PC-9 (cell line): ENCODE measurements at regions of chr9 and their contacts with region 1.

Region 1: DNA sequence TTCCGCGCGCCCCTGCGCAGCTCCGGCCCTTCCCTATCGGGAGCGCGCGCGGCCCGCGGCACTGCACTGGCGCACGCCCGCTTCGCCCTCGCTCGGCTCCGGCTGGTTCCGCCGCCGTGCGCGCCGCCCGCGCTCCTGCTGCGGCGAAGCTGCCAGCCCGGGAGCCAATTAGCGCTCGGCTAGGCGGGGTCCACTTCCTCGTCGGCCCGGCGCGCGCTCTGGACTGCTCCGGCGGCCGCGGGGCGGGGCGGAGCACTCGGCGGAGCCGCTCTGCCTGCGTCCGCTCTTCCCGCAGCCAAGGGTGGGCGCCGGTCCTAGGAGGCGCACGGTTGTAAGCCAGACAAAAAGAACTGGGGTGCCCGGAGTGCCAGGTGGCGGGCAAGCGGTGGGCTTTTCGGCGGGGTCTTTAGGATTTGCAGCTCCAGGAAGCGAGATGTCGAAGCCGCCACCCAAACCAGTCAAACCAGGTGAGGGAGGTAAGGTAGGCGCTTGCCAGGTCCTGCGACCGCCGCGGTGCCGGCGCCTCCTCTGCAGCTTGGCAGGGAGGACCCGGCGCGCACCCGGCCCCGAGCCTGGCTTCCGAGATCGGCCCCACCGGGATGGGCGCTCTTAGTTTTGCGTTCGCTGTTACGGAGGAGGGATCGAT is at the start of gene OSTF1:
- DNase-seq: peak; percentile 84 to 98
- H3K4me3 ChIP-seq: peak within 1 kb of the TSS; percentile 78
- H3K27ac ChIP-seq: peak within 1 kb of the TSS; percentile 81
- H3K4me1 ChIP-seq: peaks cover 26% of the 10 kb centered on the region
- H3K27me3 ChIP-seq: no peaks in the 10 kb centered on the region
- CTCF ChIP-seq: no peak
- total RNA-seq, gene OSTF1: 42.0 and 58.4 TPM in 2 replicates

Region 2: DNA sequence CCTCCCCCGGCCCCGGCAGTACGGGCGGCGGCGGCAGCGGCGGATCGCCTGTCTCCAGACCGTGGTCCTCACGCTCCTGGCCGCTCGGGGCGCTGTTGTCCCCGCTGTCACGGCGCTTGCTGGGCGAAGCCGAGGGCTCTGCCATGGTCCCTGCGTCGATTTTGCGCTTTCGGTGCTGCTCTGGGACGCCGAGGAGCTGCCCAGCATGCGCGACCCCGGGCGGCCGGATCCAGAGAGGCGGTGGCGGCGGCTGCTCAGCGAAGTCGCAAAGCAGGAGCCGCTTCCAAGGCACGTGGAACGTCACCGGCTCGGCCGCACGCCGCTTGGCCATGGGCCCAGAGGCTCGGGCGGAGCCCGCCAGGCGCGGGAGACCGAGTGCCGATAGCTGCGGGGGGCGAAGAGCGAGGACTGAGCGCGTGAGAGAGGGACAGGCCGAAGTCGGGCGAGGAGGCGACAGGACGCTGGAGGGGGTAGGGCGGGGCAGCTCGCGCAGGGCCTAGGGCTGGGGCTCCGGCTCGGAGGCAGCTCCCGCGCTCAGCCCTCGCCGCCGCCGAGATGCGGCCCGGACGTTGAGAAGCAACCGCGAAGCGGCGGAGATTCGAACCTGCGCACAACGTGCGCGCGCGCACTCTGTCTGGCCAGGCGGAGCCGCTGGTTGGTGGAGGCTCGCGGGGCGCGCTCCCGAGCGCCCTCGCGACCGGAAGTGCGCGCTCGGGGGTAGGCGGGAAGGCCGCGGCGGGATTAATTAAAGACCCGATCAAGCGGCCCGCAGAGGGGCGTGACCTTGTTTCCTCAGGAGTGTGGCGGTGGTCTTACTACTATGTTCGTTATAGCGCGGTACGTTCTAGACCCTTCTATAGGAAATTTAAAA is 135.9 kb before region 1 on chr9 and contains the start of gene C9orf40:
- CTCF ChIA-PET with region 1: no interaction called
- POLR2A ChIA-PET with region 1: interaction called, 4 read pairs
- intact Hi-C with region 1: loop called (anchors 5 kb)
- DNase-seq: peak; percentile 66 to 89
- H3K4me3 ChIP-seq: peak within 1 kb of the TSS; percentile 97
- H3K27ac ChIP-seq: peak within 1 kb of the TSS; percentile 60
- H3K4me1 ChIP-seq: peaks cover 6% of the 10 kb centered on the region; the same call in 1 of the 2 replicates
- H3K27me3 ChIP-seq: no peaks in the 10 kb centered on the region
- CTCF ChIP-seq: peak; percentile 83
- total RNA-seq, gene C9orf40: 10.8 and 11.3 TPM in 2 replicates

Region 3: GRCh38 chr9:75064307-75065025 is 23.9 kb before region 1 on chr9:
- CTCF ChIA-PET with region 1: no interaction called
- POLR2A ChIA-PET with region 1: no interaction called
- intact Hi-C with region 1: no loop called
- DNase-seq: no peak
- H3K4me3 ChIP-seq: no peak overlapping the region
- H3K27ac ChIP-seq: no peak overlapping the region
- H3K4me1 ChIP-seq: no peaks in the 10 kb centered on the region
- H3K27me3 ChIP-seq: no peaks in the 10 kb centered on the region
- CTCF ChIP-seq: no peak

Region 4: DNA sequence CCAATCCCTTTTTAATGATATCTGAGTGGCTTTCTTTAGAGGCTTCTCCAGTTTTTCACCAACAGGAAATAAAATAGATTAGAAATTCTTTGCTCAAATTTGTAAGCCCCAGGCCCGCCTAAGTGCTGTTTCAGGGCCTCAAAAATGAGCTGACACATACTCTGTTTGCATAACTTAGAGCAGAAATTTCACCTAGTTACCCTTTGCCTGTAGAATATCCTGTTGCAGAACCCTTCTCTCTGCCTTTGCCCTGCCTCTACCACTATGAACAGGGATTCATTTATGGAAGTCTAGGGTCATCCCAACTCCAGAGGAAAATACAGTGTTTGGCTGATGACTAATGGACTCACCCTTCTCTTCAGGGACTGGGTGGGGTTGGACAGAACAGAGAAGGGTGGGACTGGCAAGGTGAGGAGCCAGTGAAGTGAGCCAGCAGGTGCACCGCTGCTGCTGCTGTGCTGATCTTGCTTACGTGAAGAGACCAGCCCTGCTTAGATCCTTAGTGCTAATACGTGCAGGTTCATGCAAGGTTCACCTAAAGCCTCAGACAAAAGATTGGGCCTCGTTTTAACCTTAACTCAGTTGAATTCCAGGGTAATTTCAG is 22.7 kb after region 1 on chr9:
- CTCF ChIA-PET with region 1: no interaction called
- POLR2A ChIA-PET with region 1: no interaction called
- intact Hi-C with region 1: loop called (anchors 2 kb)
- DNase-seq: peak; percentile 75 to 84
- H3K4me3 ChIP-seq: peak overlapping the region; percentile 38; the same call in 1 of the 2 replicates
- H3K27ac ChIP-seq: peak overlapping the region; percentile 93
- H3K4me1 ChIP-seq: peaks cover 33% of the 10 kb centered on the region
- H3K27me3 ChIP-seq: no peaks in the 10 kb centered on the region
- CTCF ChIP-seq: no peak

Region 5: DNA sequence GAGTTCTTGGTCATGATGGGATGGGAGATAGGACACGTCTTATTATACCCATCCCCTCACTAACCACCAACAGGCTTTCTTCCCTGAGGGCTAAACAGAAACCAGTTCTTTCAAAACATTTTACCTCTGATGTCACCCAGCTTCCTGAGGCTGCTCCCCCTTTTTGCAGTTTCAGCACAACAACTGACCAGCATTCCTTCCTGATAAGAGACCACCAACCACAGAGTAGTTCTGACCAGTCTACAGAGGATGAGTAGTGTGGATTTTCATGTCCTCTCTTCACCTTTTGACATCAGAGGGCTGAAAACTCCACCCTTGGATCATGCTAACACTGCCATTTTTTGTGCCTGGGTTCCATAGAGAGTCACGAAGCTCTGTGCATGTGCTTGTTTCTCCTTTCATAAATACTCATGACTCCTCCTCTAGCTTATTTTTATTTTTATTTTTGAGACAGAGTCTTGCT is 82.5 kb after region 1 on chr9:
- CTCF ChIA-PET with region 1: no interaction called
- POLR2A ChIA-PET with region 1: interaction called, 13 read pairs
- intact Hi-C with region 1: loop called (anchors 5 kb)
- DNase-seq: peak; percentile 21 to 52
- H3K4me3 ChIP-seq: no peak overlapping the region
- H3K27ac ChIP-seq: no peak overlapping the region; the same call in 1 of the 2 replicates
- H3K4me1 ChIP-seq: peaks cover 40% of the 10 kb centered on the region
- H3K27me3 ChIP-seq: no peaks in the 10 kb centered on the region
- CTCF ChIP-seq: no peak

Region 6: DNA sequence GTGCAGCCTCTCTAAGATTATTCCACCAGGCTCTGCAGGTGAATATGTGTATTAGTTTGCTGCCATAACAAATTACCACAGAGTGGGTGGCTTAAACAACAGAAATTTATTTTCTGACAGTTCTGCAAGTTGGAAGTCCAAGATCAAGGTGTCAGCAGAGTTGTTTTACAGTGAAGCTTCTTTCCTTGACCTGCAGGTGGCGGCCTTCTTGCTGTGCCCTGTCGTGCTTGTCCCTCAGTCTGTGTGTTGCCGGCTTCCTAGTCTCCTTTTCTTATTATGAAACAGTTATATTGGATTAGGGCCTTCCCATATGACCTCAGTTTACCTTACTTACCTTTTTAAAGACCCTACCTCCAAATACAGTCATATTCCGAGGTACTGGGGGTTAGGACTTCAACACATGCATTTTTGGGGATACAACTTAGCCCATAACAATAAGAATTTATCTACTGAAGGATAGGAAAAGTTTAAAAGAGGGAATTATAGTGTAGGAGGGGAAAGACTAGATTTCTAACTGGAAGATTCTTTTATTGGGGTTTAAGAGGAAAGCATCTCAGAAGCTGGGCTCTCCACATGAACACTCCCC is 97.3 kb after region 1 on chr9:
- CTCF ChIA-PET with region 1: no interaction called
- POLR2A ChIA-PET with region 1: interaction called, 6 read pairs
- intact Hi-C with region 1: loop called (anchors 2 kb)
- DNase-seq: peak in 1 of 2 experiments; percentile 25
- H3K4me3 ChIP-seq: no peak overlapping the region
- H3K27ac ChIP-seq: no peak overlapping the region
- H3K4me1 ChIP-seq: peaks cover 14% of the 10 kb centered on the region
- H3K27me3 ChIP-seq: no peaks in the 10 kb centered on the region
- CTCF ChIP-seq: peak; percentile 63

Region 7: GRCh38 chr9:75238311-75238978 is 150.1 kb after region 1 on chr9:
- CTCF ChIA-PET with region 1: no interaction called
- POLR2A ChIA-PET with region 1: no interaction called
- intact Hi-C with region 1: loop called (anchors 5 kb)
- DNase-seq: peak; percentile 45 to 61
- H3K4me3 ChIP-seq: no peak overlapping the region
- H3K27ac ChIP-seq: no peak overlapping the region
- H3K4me1 ChIP-seq: peaks cover 14% of the 10 kb centered on the region
- H3K27me3 ChIP-seq: no peaks in the 10 kb centered on the region
- CTCF ChIP-seq: peak; percentile 84

Region 8: GRCh38 chr9:76313771-76314170 is 1225.4 kb after region 1 on chr9:
- CTCF ChIA-PET with region 1: interaction called, 6 read pairs
- POLR2A ChIA-PET with region 1: no interaction called
- intact Hi-C with region 1: loop called (anchors 10 kb)
- DNase-seq: no peak
- H3K4me3 ChIP-seq: no peak overlapping the region
- H3K27ac ChIP-seq: no peak overlapping the region
- H3K4me1 ChIP-seq: peaks cover 47% of the 10 kb centered on the region
- H3K27me3 ChIP-seq: no peaks in the 10 kb centered on the region
- CTCF ChIP-seq: no peak